ENCODE measurements at regions of chr2 and their contacts with region 1.

Region 1: DNA sequence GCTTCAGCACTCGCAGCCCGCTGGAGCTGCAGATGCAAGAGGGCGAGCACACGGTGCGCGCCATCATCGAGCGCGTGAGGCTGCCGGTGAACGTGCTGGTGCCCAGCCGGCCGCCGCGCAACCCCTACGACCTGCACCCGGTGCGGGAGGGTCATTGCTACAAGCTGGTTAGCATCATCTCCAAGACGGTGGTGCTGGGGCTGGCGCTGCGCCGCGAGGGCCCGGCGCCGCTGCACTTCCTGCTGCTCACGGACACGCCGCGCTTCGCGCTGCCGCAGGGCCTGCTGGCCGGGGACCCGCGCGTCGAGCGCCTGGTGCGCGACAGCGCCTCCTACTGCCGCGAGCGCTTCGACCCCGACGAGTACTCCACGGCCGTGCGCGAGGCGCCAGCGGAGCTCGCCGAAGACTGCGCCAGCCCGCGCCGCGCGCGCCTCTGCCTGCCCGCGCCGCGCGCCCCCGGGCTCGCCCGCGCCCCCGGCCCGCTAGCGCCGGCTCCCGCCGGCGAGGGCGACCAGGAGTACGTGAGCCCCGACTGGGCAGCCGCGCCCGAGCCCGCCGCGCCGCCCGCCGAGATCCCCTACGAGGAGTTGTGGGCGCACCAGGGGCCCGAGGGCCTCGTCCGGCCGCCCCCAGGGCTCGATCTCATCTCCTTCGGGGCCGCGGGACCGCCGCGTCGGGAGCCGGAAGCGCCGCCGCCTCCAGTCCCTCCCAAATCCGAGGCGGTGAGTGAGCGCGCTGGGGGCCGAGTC is 11.8 kb downstream of the GAREM2 start:
- DNase-seq: peak; percentile 81 to 96 (median 86)
- ATAC-seq: peak; percentile 99
- H3K4me3 ChIP-seq: peak overlapping the region; percentile 60
- H3K4me3 Mint-ChIP-seq: peak overlapping the region; percentile 89
- H3K27ac ChIP-seq: peak overlapping the region in 1 of 2 donors; percentile 24
- H3K27ac Mint-ChIP-seq: peak overlapping the region; percentile 71
- H3K4me1 ChIP-seq: peaks cover 26% of the 10 kb centered on the region
- H3K4me1 Mint-ChIP-seq: peaks cover 21% of the 10 kb centered on the region
- H3K27me3 ChIP-seq: peaks cover 0 to 4% of the 10 kb centered on the region in 2 experiments
- H3K27me3 Mint-ChIP-seq: peaks cover 13% of the 10 kb centered on the region
- CTCF ChIP-seq: peak; percentile 59

Region 2: GRCh38 chr2:25673300-25674076 is 511.2 kb before region 1 on chr2 and contains the start of gene DTNB:
- CTCF ChIA-PET with region 1: interaction called, 6 read pairs
- POLR2A ChIA-PET with region 1: interaction called, 4 read pairs
- intact Hi-C with region 1: loop called in 1 of 2 experiments (anchors 10 kb)
- DNase-seq: peak; percentile 58 to 92 (median 76)
- ATAC-seq: peak; percentile 75
- H3K4me3 ChIP-seq: peak within 1 kb of the TSS; percentile 84
- H3K4me3 Mint-ChIP-seq: peak within 1 kb of the TSS; percentile 91
- H3K27ac ChIP-seq: peak within 1 kb of the TSS; percentile 43 to 66
- H3K27ac Mint-ChIP-seq: peak within 1 kb of the TSS; percentile 85
- H3K4me1 ChIP-seq: peaks cover 23% of the 10 kb centered on the region
- H3K4me1 Mint-ChIP-seq: peaks cover 35% of the 10 kb centered on the region
- H3K27me3 ChIP-seq: peaks cover 0 to 2% of the 10 kb centered on the region in 2 experiments
- H3K27me3 Mint-ChIP-seq: no peaks in the 10 kb centered on the region
- CTCF ChIP-seq: no peak
- total RNA-seq, gene DTNB: 30.1 to 33.6 TPM

Region 3: DNA sequence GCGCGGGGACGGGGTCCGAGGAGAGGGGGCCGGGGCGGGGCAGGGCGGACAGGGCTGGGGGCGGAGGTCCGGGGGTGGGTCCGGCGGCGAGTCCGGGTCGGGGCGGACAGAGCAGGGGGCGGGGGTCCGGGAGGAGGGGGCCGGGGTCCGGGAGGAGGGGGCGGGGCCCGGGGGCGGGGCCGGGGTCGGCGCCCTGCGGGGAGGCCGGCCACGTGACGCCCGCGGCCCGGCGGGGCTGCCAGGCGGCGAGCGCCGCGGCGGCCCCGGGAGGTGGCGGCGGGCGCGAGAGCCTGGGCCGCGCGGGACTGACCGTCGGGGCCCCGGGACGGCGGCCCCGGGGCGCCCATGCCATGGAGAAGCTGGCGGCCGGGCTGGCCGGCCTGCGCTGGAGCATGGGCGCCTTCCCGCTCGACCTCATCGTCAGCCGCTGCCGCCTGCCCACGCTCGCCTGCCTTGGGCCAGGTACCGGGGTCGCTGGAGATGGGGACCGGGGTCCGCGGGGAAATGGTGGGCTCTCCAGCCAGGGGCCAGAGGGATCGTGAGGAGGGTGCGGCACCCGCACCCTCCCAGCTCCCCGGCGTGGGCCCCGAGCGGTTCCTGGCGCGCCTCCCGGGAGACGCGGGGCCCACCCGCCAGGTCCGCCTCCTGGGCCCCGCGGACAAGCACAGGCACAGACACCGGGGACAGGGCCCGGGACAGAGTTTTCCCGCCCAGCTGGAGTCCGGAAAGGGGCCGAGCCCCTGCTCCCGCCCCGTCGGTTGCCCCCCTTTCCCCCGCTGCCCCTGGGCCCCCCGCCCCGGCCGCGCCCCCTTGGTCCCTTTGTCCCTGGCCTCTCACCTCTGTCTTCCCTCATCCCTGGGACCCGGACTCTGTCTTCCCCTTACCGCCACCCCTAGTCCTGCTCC is 11.6 kb before region 1 on chr2 and contains the start of gene GAREM2:
- CTCF ChIA-PET with region 1: interaction called, 9 read pairs
- POLR2A ChIA-PET with region 1: interaction called, 13 read pairs
- intact Hi-C with region 1: no loop called
- DNase-seq: peak in 1 of 14 experiments; percentile 26
- ATAC-seq: no peak
- H3K4me3 ChIP-seq: peak within 1 kb of the TSS; percentile 28
- H3K4me3 Mint-ChIP-seq: peak within 1 kb of the TSS; percentile 91
- H3K27ac ChIP-seq: no peak within 1 kb of the TSS
- H3K27ac Mint-ChIP-seq: no peak within 1 kb of the TSS
- H3K4me1 ChIP-seq: peaks cover 22% of the 10 kb centered on the region
- H3K4me1 Mint-ChIP-seq: peaks cover 15% of the 10 kb centered on the region
- H3K27me3 ChIP-seq: peaks cover 37 to 45% of the 10 kb centered on the region in 2 experiments
- H3K27me3 Mint-ChIP-seq: peaks cover 42% of the 10 kb centered on the region
- CTCF ChIP-seq: no peak
- total RNA-seq, gene GAREM2: 4.3 to 7.3 TPM

Region 4: GRCh38 chr2:26196683-26197418 is 12.1 kb after region 1 on chr2:
- CTCF ChIA-PET with region 1: interaction called, 13 read pairs
- POLR2A ChIA-PET with region 1: interaction called, 4 read pairs
- intact Hi-C with region 1: no loop called
- DNase-seq: no peak
- ATAC-seq: no peak
- H3K4me3 ChIP-seq: no peak overlapping the region
- H3K4me3 Mint-ChIP-seq: no peak overlapping the region
- H3K27ac ChIP-seq: no peak overlapping the region
- H3K27ac Mint-ChIP-seq: no peak overlapping the region
- H3K4me1 ChIP-seq: no peaks in the 10 kb centered on the region
- H3K4me1 Mint-ChIP-seq: no peaks in the 10 kb centered on the region
- H3K27me3 ChIP-seq: no peaks in the 10 kb centered on the region
- H3K27me3 Mint-ChIP-seq: no peaks in the 10 kb centered on the region
- CTCF ChIP-seq: no peak

Region 5: DNA sequence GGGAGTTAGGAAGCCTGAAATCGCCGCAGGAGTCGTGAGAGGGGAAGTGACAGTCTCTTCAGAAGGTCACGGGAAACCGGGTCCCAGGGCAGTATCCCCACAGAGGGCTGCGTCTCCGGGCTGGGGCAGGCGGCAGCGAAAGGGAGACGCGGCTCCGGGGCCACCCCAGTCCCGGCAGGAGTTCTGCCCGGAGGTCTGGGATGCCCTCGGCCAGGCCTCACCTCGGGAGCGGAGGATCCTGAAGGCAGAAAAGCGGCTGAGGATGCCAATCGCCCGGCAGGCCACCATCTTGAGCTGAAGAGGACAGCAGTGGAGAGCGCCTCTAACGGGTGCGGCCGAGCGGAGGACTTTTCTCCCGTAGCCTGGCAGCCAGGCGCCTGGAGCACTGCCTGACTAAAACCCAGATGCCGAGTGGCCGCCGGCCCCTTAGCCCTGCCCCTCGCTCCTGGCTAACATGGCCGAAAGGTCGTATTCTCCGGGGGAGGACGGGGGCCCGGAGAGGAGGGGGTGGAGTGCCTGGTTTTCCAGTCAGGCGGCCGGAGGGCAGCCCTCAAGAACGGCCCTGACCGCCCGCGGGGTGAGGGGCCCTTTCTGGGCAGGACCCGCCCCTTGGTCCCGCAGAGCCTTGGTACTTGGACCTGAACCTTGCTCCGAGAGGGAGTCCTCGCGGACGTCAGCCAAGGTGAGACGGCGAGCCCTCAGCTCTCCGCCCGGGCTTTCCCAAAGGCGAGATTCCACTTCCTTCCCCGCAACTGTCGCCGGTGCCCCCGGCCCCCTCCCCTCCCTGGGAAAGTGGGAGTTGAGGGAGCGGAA is 59.8 kb after region 1 on chr2 and contains the starts of genes HADHA and HADHB:
- CTCF ChIA-PET with region 1: interaction called, 6 read pairs
- POLR2A ChIA-PET with region 1: interaction called, 30 read pairs
- intact Hi-C with region 1: loop called in 1 of 2 experiments (anchors 5 kb)
- DNase-seq: peak; percentile 68 to 93 (median 80)
- ATAC-seq: peak; percentile 81
- H3K4me3 ChIP-seq: peak within 1 kb of the TSS; percentile 96
- H3K4me3 Mint-ChIP-seq: peak within 1 kb of the TSS; percentile 100
- H3K27ac ChIP-seq: peak within 1 kb of the TSS; percentile 95 to 98
- H3K27ac Mint-ChIP-seq: peak within 1 kb of the TSS; percentile 97
- H3K4me1 ChIP-seq: peaks cover 33% of the 10 kb centered on the region
- H3K4me1 Mint-ChIP-seq: peaks cover 76% of the 10 kb centered on the region
- H3K27me3 ChIP-seq: no peaks in the 10 kb centered on the region
- H3K27me3 Mint-ChIP-seq: no peaks in the 10 kb centered on the region
- CTCF ChIP-seq: no peak
- total RNA-seq, gene HADHA: 72.4 to 73.7 TPM
- total RNA-seq, gene HADHB: 25.2 to 30.3 TPM

Region 6: DNA sequence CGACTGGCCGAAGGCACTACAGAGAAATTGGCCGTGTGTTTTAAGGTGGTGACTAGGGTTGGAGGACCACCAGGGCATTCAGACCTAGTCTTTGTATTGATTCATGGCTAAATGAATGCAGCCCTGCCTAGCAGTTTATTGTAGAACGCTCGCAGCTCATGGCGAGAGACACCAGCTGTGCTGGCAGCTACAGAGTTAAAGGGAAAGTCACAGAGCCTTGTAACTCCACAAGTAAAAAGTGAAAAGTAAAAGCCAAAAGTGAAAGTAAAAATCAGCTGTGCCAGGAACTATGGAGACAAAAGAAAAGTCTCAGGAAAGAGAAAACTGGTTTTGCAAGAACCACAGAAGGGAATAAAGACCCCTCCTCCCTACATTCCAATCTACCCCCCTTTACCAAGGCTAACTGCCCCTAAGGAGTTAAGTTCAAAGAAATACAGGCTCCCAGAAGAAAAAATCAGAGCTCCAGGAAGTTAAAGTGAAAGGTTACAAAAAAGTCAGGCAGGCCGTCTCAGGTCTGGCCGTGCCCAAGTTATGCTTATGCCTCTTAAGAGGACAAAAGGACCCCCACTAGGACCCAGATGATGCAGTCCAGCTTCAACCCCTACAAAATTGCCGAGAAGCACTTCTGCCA is 114.9 kb after region 1 on chr2:
- CTCF ChIA-PET with region 1: no interaction called
- POLR2A ChIA-PET with region 1: interaction called, 22 read pairs
- intact Hi-C with region 1: no loop called
- DNase-seq: peak in 8 of 14 experiments; percentile 9 to 62 (median 40)
- ATAC-seq: peak; percentile 46
- H3K4me3 ChIP-seq: peak overlapping the region; percentile 79
- H3K4me3 Mint-ChIP-seq: no peak overlapping the region
- H3K27ac ChIP-seq: peak overlapping the region; percentile 62 to 65
- H3K27ac Mint-ChIP-seq: no peak overlapping the region
- H3K4me1 ChIP-seq: peaks cover 24% of the 10 kb centered on the region
- H3K4me1 Mint-ChIP-seq: no peaks in the 10 kb centered on the region
- H3K27me3 ChIP-seq: no peaks in the 10 kb centered on the region
- H3K27me3 Mint-ChIP-seq: no peaks in the 10 kb centered on the region
- CTCF ChIP-seq: no peak

Measured in CD4-positive, alpha-beta T cell (primary cell).